A673 (cell line): ENCODE measurements at regions of chr5 and their contacts with region 1.

Region 1: DNA sequence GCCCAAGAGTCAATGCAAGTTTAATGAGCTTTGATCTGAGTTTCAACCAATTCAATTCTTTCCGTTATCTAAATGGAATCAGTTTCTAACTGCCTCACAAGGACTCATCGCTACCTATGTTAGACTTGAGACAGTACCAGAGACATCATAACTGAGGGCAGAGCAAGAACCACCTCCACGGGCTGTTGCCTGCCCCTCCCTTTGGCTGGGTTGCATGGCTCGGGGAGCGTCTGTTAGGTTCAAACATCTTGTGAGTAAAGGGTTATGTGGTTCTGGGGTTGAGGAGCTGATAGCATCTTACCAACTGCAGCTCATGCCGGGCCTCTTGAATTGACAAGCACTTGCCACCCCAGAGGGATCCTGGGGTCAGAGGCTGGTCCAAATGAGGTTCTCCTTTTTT is 457.9 kb downstream of the ENC1 start:
- DNase-seq: no peak
- H3K4me3 ChIP-seq: no peak overlapping the region
- H3K27ac ChIP-seq: no peak overlapping the region
- H3K4me1 ChIP-seq: peaks cover under 1% of the 10 kb centered on the region
- H3K27me3 ChIP-seq: peaks cover 4% of the 10 kb centered on the region
- CTCF ChIP-seq: no peak

Region 2: DNA sequence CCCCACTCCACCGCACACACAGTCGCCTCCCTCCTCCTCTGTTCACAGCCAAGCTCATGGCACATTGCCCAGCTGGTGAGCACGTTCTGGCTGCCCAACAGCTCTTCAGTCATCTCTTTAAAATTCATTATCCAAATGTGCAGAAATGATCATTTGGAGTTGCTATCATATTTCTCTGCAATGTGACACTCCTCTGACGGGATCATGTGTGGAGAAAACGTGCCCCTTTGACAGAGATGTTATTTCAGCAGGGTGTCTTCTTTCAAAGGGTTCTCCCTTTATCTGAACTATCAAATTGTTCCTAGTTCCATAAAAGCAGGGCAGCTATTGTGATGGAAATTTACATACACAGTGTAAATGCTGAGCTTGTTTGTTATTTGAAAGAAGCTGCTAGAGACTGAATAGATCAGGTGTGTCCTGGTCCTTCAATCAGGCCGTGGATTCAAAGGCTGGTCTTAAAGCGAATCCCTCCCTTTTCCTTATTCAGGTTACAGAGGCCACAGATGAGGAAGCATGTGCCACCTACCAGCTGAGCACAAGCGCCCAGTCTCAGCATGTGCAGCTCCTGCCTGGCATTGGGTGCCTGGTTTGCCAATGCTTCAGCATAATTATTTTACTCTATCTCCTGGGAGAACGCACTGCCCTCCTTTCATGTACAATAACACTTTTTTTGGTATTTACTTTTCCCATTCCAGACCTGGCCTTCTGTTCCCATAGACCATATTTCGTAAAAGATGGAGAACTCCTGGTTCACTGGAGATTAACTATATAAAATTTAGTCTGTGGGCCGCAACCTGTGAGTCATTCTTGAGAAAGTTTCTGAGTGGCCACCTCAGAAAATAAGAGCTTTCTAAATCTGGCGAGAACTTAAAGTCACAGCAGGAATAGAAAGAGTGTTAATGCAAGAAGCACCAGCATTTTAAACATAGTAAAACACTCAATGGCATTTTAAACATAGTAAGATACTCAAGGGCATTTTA is 24.3 kb after region 1 on chr5:
- CTCF ChIA-PET with region 1: interaction called, 10 read pairs
- POLR2A ChIA-PET with region 1: no interaction called
- intact Hi-C with region 1: no loop called
- DNase-seq: peak; percentile 81
- H3K4me3 ChIP-seq: no peak overlapping the region
- H3K27ac ChIP-seq: no peak overlapping the region
- H3K4me1 ChIP-seq: peaks cover 14% of the 10 kb centered on the region
- H3K27me3 ChIP-seq: no peaks in the 10 kb centered on the region
- CTCF ChIP-seq: no peak